ENCODE measurements at regions of chr4 and their contacts with region 1.

Region 1: DNA sequence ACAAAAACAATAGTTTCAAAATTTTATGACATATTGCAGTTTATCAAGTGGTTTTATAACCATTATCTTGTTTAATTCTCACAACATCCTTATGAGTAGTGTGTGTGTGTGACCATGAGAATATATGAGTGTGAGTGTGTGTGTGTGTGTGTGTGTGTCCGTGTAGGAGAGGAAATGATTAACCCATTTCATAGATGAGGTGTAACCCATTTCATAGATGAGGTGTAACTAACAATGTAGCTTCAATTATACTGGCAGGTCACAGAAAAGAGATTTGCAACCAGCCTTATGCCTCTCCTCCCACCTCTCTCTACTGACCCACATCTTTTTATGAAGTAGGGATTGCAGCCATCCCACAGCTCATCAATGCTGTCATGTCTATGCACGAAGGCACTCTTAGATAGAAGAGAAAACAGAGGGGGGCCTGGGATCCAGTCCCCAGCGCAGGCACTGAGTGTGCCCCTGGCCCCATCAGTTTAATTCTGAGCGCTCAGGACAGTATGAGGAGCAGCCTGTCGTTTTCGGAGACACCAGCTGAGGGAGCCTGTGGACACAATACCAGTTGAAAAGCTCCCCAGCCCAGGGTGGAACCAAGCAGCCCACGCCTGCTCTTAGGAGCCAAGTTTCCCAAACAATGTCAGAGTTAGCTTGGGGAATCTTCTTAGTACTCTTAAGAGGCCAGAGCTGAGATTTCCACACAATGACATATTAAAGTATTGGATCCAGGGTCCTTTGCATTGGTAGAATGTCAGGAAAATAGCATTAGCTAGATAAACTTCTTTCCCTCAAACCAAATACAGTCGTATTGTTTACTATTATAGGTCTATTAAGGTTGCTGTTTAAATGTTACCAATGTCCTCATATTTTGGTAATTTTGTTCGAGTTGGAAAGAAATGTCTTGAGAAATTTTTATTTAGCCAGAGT is 88.6 kb downstream of the PALLD start:
- DNase-seq: peak; percentile 70 to 86
- ATAC-seq: peak; percentile 89 to 94 (median 90)
- H3K4me3 ChIP-seq: no peak overlapping the region
- H3K27ac ChIP-seq: peak overlapping the region in 3 of 10 donors; percentile 57 to 70 (median 67)
- H3K4me1 ChIP-seq: peaks cover 9 to 56% (median 35%) of the 10 kb centered on the region in 9 donors
- H3K27me3 ChIP-seq: no peaks in the 10 kb centered on the region
- CTCF ChIP-seq: peak; percentile 56 to 88 (median 76)

Region 2: DNA sequence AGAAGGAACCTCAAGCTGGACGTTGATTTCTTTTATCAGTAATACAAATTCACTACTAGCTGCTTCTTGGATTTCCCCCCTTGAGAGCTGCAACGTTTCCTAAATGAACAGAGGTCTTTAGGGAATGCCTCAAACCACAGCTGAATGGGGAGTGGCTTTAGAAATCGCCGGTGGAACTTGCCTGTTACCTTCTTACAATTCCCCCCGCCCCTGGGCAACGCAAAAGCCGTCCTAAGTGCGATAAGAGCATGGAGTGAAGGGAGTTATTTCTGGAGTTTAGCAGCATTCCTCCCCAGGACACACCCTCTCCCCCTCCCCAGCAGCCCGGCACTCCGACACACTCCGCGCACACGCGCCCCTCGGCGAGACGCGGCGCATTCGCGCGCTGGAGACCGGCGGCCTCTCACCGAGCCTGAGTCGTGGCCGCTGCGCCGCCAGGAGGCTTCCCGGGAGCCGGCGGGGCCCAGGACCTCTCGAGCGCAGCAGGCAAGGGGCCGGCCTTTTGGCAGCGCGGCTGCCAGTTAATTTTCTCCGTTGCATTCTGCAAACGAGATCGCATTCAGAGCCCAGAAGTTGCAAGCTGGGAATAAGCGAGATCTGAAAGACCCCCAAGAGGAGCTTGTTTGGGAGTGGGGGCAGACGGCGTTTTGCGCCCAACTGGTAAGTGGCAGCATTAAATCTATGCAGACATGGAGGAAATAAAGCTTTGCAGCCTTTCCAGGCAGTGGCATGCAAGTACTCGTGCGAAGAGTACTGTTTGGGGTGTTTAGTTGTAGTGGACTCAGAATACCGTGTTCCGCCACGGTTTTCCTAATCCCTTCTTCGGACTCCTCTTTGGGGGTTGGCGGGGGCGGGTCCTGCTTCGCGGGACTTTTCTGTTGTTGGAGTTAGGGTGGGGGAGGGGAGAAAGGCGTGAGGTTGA is 46.1 kb after region 1 on chr4:
- intact Hi-C with region 1: loop called in 6 of 10 experiments (anchors 2 to 5 kb)
- DNase-seq: peak; percentile 57 to 75
- ATAC-seq: peak; percentile 82 to 92 (median 88)
- H3K4me3 ChIP-seq: peak overlapping the region; percentile 27 to 68 (median 60)
- H3K27ac ChIP-seq: peak overlapping the region; percentile 29 to 92 (median 76)
- H3K4me1 ChIP-seq: peaks cover 0 to 57% (median 47%) of the 10 kb centered on the region in 9 donors
- H3K27me3 ChIP-seq: peaks cover 0 to 64% (median 0%) of the 10 kb centered on the region in 7 donors
- CTCF ChIP-seq: peak in 8 of 9 donors; percentile 0 to 63 (median 46)

Region 3: DNA sequence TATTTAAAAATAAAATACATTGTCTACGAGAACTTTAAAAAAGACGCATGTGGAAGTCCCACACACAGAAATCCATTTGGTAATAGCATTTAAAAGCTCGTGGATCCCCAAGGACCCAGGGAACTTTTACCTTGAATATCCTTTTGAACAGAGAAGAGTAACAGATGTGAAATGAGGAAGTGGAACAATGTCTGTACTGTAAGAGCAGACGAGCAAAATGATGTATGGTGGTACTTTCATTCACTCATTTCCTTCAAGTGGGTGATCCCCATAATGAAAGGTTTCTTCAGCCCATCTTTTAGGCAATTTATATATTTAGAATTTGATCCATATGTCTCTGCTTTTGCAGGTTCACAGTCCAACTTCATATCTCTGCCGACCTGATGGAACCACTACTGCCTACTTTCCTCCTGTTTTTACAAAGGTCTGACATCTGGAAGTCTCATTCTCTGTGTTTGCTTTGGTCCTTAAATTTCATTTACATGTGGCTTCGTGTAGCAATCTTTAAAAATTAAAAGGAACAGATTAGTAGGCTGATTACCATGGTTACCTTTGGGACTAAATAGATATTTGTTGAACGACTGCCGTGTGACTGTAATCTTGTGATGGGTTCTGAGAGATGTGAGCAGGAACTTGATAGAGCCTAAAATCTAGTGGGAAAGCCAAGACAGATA is 99.8 kb after region 1 on chr4:
- intact Hi-C with region 1: loop called in 6 of 10 experiments (anchors 5 to 10 kb)
- DNase-seq: no peak
- ATAC-seq: peak in 3 of 8 donors; percentile 5 to 68 (median 62)
- H3K4me3 ChIP-seq: no peak overlapping the region
- H3K27ac ChIP-seq: peak overlapping the region in 1 of 10 donors; percentile 5
- H3K4me1 ChIP-seq: peaks cover 0 to 11% (median 5%) of the 10 kb centered on the region in 9 donors
- H3K27me3 ChIP-seq: no peaks in the 10 kb centered on the region
- CTCF ChIP-seq: no peak

Region 4: GRCh38 chr4:168694648-168695047 is 109.2 kb after region 1 on chr4:
- intact Hi-C with region 1: loop called in 6 of 10 experiments (anchors 5 to 10 kb)
- DNase-seq: no peak
- ATAC-seq: peak in 6 of 8 donors; percentile 48 to 65 (median 64)
- H3K4me3 ChIP-seq: no peak overlapping the region
- H3K27ac ChIP-seq: peak overlapping the region in 6 of 10 donors; percentile 3 to 75 (median 56)
- H3K4me1 ChIP-seq: peaks cover 0 to 28% (median 6%) of the 10 kb centered on the region in 9 donors
- H3K27me3 ChIP-seq: no peaks in the 10 kb centered on the region
- CTCF ChIP-seq: no peak

Region 5: DNA sequence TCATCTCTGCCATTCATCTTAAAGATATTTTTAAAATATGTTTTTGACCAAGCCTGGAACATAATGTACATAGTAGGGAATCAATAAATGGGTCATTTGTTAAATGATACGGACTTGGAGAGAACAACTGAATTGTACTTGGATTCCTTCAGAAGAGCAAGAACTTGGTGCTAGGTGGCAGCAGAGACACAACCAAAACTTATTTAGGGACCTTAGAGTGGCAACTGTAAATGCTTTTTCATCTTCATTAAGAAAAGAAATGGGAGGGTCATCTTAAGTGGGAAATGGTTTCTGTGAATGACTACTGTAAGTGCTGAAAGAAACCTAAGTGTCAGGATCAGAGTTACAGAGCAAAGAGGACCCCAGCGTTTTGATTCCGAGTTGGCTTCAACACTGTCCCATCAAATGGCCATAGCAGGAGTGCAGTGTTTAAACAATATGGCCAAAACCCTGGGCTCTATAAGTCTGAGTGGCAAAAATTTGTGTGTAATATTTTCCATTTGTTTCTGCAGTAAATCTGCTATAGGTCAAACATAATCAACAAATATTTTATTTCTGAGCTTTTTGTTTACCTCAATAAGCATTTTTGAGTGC is 125.0 kb after region 1 on chr4:
- intact Hi-C with region 1: loop called in 1 of 10 experiments (anchors 5 kb)
- DNase-seq: peak in 1 of 2 donors; percentile 36
- ATAC-seq: peak in 7 of 8 donors; percentile 49 to 78 (median 65)
- H3K4me3 ChIP-seq: no peak overlapping the region
- H3K27ac ChIP-seq: peak overlapping the region in 6 of 10 donors; percentile 44 to 77 (median 62)
- H3K4me1 ChIP-seq: peaks cover 8 to 30% (median 22%) of the 10 kb centered on the region in 9 donors
- H3K27me3 ChIP-seq: no peaks in the 10 kb centered on the region
- CTCF ChIP-seq: peak; percentile 30 to 76 (median 61)

Region 6: GRCh38 chr4:168893807-168894206 is 308.4 kb after region 1 on chr4:
- intact Hi-C with region 1: loop called in 1 of 10 experiments (anchors 10 kb)
- DNase-seq: no peak
- ATAC-seq: peak in 3 of 8 donors; percentile 26 to 43 (median 30)
- H3K4me3 ChIP-seq: no peak overlapping the region
- H3K27ac ChIP-seq: peak overlapping the region in 1 of 10 donors; percentile 57
- H3K4me1 ChIP-seq: peaks cover 0 to 23% (median 7%) of the 10 kb centered on the region in 9 donors
- H3K27me3 ChIP-seq: no peaks in the 10 kb centered on the region
- CTCF ChIP-seq: no peak

Region 7: GRCh38 chr4:168917138-168917779 is 331.8 kb after region 1 on chr4:
- intact Hi-C with region 1: loop called in 7 of 10 experiments (anchors 5 kb)
- DNase-seq: no peak
- ATAC-seq: peak in 1 of 8 donors; percentile 28
- H3K4me3 ChIP-seq: no peak overlapping the region
- H3K27ac ChIP-seq: peak overlapping the region in 1 of 10 donors; percentile 20
- H3K4me1 ChIP-seq: peaks cover 0 to 28% (median 7%) of the 10 kb centered on the region in 9 donors
- H3K27me3 ChIP-seq: no peaks in the 10 kb centered on the region
- CTCF ChIP-seq: peak; percentile 16 to 75 (median 67)

Measured in heart right ventricle (tissue), 16 donors.